Heart left ventricle (tissue), 16 donors: ENCODE measurements at regions of chr9 and their contacts with region 1.

Region 1: GRCh38 chr9:13524245-13524644 is 244.8 kb upstream of the MPDZ start:
- DNase-seq: no peak
- ATAC-seq: no peak
- H3K4me3 ChIP-seq: no peak overlapping the region
- H3K27ac ChIP-seq: no peak overlapping the region
- H3K4me1 ChIP-seq: peaks cover 0 to 6% (median 0%) of the 10 kb centered on the region in 12 donors
- H3K27me3 ChIP-seq: no peaks in the 10 kb centered on the region
- CTCF ChIP-seq: no peak
- POLR2A ChIP-seq: no peak

Region 2: GRCh38 chr9:13502484-13502883 is 21.8 kb before region 1 on chr9:
- intact Hi-C with region 1: loop called in 1 of 10 experiments (anchors 2 kb)
- DNase-seq: peak; percentile 22 to 64 (median 45)
- ATAC-seq: peak; percentile 70 to 92 (median 81)
- H3K4me3 ChIP-seq: no peak overlapping the region
- H3K27ac ChIP-seq: no peak overlapping the region
- H3K4me1 ChIP-seq: no peaks in the 10 kb centered on the region
- H3K27me3 ChIP-seq: no peaks in the 10 kb centered on the region
- CTCF ChIP-seq: no peak
- POLR2A ChIP-seq: no peak